ENCODE measurements at regions of chr5 and their contacts with region 1.

Region 1: DNA sequence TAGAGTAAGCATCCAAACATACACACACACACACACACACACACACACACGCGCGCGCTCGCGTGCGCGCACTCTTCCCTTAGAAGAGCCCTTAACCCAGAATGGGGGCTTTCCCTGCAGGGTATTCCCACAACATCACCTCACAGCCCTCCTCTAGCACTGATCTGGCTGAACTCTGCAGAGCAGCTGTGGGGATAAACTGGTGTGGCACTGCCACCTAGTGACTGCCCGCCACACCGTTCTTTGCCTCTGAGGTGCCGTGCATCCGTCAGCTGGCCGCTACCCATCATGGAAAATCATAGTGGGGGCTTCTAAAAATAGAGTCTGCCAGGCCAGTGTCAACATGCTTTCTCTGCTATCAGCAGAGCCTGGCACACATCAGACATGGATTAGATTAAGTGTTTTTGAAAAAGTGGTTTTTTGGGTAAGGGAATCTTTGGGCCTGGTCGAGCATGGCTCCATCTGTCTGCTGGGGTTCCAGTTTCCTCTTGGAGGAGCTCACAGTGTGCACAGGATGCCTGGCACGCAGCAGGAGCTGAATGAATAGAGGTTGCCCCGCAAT is 88.1 kb downstream of the KCNN2 start:
- DNase-seq: peak; percentile 49
- H3K4me3 Mint-ChIP-seq: no peak overlapping the region
- H3K27ac Mint-ChIP-seq: no peak overlapping the region
- H3K4me1 Mint-ChIP-seq: no peaks in the 10 kb centered on the region
- H3K27me3 Mint-ChIP-seq: peaks cover 4% of the 10 kb centered on the region

Region 2: GRCh38 chr5:113612060-113612496 is 837.9 kb before region 1 on chr5:
- CTCF ChIA-PET with region 1: interaction called, 12 read pairs
- DNase-seq: no peak
- H3K4me3 Mint-ChIP-seq: no peak overlapping the region
- H3K27ac Mint-ChIP-seq: no peak overlapping the region
- H3K4me1 Mint-ChIP-seq: peaks cover 12% of the 10 kb centered on the region
- H3K27me3 Mint-ChIP-seq: peaks cover 10% of the 10 kb centered on the region

Region 3: DNA sequence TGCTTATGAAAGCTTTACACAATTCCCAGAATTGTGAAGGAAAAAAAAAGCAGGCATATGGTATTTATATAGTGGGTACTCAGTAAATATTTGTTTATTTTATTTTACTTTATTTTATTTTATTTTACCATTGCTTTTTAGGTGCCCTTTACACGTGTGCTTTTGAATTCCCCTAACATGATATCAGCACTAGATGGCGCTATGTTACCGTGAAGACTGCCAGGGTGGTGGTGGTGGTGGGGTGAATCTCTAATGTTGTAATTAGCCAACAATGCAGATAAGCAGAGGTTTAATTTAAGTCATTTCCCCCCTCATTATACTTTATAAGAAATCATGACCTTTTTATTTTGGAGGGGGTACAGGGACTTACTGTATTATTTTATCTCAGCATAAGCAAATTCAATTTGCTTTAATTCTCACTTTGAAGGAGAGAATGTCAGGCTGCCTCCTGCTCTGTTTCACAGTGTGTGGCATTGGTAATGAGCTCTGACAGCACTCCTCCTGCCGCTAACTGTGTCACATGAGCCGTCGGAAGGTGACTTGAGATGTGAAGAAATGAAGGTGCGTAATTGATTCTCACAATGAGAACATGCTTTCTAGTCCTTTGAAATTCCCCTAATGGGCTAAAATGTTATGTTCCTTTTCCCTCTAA is 770.9 kb before region 1 on chr5:
- CTCF ChIA-PET with region 1: interaction called, 13 read pairs
- DNase-seq: peak; percentile 37
- H3K4me3 Mint-ChIP-seq: no peak overlapping the region
- H3K27ac Mint-ChIP-seq: no peak overlapping the region
- H3K4me1 Mint-ChIP-seq: no peaks in the 10 kb centered on the region
- H3K27me3 Mint-ChIP-seq: no peaks in the 10 kb centered on the region

Region 4: DNA sequence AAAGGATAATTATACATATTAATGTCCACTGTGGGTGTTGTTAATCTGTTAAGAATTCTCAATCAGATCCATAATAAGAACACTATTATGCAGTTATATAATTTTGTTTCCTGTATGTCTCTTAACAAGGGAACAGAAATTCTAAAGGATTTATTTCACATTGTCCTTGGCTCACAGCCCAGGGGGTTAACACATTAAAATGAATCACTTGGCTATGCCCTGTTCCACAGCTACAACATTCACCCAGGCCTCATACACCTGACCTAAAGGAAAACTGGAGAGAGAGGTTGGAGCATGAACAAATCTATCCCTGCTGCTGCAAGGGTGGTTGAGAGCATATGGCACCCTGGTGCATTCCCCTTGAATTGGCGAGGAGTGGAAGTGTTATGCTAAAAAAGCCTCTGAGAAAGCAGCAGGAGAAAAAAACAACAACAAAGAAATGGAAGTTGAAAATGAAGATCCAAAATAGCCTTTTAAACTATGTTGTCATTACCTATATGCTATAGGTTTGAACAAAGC is 27.9 kb after region 1 on chr5:
- CTCF ChIA-PET with region 1: no interaction called
- DNase-seq: no peak
- H3K4me3 Mint-ChIP-seq: no peak overlapping the region
- H3K27ac Mint-ChIP-seq: no peak overlapping the region
- H3K4me1 Mint-ChIP-seq: no peaks in the 10 kb centered on the region
- H3K27me3 Mint-ChIP-seq: no peaks in the 10 kb centered on the region

Measured in activated naive CD4-positive, alpha-beta T cell treated with anti-CD3 and anti-CD28 coated beads, Interleukin-2, amount 10 ng/mL, durations not matched to agents 7 days and 5 days (primary cell).